Activated CD4-positive, alpha-beta T cell treated with anti-CD3 and anti-CD28 coated beads for 36 hours (primary cell): ENCODE measurements at regions of chr4 and their contacts with region 1.

Region 1: DNA sequence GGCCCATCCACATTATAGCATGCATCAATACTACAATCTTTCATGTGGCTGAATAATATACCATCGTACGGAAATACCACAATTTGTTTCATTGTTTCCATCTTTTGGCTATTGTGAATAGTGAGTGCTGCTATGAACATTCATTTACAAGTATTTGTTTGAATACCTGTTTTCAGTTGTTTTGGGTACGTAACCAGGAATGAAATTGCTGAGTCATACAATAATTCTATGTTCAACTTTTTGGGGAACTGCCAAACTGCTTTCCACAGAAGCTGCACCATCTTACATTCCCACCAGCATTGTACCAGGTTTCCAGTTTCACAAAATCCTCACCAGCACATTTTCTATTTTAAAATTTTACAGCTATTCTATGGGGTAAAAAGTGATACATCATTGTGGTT is 28.5 kb upstream of the MANBA start:
- DNase-seq: no peak
- ATAC-seq: peak; percentile 63
- H3K4me3 Mint-ChIP-seq: no peak overlapping the region
- H3K27ac Mint-ChIP-seq: peak overlapping the region; percentile 25
- H3K4me1 Mint-ChIP-seq: peaks cover 33% of the 10 kb centered on the region
- H3K27me3 Mint-ChIP-seq: no peaks in the 10 kb centered on the region

Region 2: DNA sequence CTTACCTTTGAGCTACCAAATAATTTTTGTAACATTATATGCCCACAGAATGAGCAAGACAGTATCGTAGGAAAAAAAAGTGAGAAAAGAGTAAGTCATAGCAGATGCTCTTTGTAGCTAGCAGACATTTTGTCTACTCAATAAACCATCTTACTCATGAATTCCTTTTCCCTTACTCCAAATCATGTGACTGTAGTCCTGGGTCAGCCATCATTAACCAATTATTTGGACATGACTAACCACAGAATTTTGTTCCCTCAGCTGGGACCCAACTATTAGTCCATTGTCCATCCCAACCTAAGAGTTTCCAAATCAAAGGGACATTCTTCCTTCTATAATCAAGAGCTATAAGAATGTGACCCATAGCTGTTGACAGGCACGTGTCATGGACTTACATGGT is 26.7 kb after region 1 on chr4:
- CTCF ChIA-PET with region 1: interaction called, 9 read pairs
- POLR2A ChIA-PET with region 1: interaction called, 4 read pairs
- intact Hi-C with region 1: loop called (anchors 2 kb)
- DNase-seq: no peak
- ATAC-seq: peak; percentile 21
- H3K4me3 Mint-ChIP-seq: no peak overlapping the region
- H3K27ac Mint-ChIP-seq: peak overlapping the region; percentile 83
- H3K4me1 Mint-ChIP-seq: peaks cover 89% of the 10 kb centered on the region
- H3K27me3 Mint-ChIP-seq: no peaks in the 10 kb centered on the region

Region 3: GRCh38 chr4:103046416-103047290 is 257.3 kb after region 1 on chr4:
- CTCF ChIA-PET with region 1: no interaction called
- POLR2A ChIA-PET with region 1: no interaction called
- intact Hi-C with region 1: no loop called
- DNase-seq: peak; percentile 49
- ATAC-seq: peak; percentile 96
- H3K4me3 Mint-ChIP-seq: no peak overlapping the region
- H3K27ac Mint-ChIP-seq: no peak overlapping the region
- H3K4me1 Mint-ChIP-seq: peaks cover 10% of the 10 kb centered on the region
- H3K27me3 Mint-ChIP-seq: no peaks in the 10 kb centered on the region